ENCODE measurements at regions of chr2 and their contacts with region 1.

Region 1: DNA sequence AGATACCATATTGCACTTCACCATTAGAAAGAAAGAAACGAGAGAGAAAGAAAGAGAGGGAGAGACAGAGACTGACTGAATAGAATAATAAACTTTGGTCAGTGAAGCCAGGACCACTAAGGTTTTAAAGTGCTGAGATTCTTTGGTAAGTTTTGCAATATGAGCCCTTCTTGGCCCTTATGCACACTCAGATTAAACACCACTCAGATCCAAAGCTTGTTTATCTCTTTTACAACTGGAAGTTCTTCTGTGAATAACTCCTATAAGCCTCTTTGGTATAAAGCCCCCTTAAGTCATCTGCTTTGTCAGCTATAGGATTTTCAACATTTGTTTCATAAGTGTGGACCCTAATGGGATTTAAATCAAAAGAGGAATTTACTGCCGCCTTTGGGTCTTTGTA is 40.8 kb downstream of the PID1 start:
- DNase-seq: no peak
- H3K4me3 ChIP-seq: no peak overlapping the region
- H3K27ac ChIP-seq: peak overlapping the region in 1 of 4 donors; percentile 23
- H3K4me1 ChIP-seq: no peaks in the 10 kb centered on the region
- H3K27me3 ChIP-seq: no peaks in the 10 kb centered on the region
- CTCF ChIP-seq: no peak
- EP300 ChIP-seq: no peak
- POLR2A ChIP-seq: no peak

Region 2: GRCh38 chr2:230124757-230125431 is 894.6 kb after region 1 on chr2:
- in situ Hi-C with region 1: no loop called
- intact Hi-C with region 1: loop called (anchors 5 kb)
- DNase-seq: peak; percentile 32
- H3K4me3 ChIP-seq: no peak overlapping the region
- H3K27ac ChIP-seq: no peak overlapping the region
- H3K4me1 ChIP-seq: peaks cover 0 to 19% (median 8%) of the 10 kb centered on the region in 4 donors
- H3K27me3 ChIP-seq: no peaks in the 10 kb centered on the region
- CTCF ChIP-seq: no peak
- EP300 ChIP-seq: no peak
- POLR2A ChIP-seq: no peak

Measured in transverse colon (tissue), 4 donors.